ENCODE measurements at regions of chr5 and their contacts with region 1.

Region 1: DNA sequence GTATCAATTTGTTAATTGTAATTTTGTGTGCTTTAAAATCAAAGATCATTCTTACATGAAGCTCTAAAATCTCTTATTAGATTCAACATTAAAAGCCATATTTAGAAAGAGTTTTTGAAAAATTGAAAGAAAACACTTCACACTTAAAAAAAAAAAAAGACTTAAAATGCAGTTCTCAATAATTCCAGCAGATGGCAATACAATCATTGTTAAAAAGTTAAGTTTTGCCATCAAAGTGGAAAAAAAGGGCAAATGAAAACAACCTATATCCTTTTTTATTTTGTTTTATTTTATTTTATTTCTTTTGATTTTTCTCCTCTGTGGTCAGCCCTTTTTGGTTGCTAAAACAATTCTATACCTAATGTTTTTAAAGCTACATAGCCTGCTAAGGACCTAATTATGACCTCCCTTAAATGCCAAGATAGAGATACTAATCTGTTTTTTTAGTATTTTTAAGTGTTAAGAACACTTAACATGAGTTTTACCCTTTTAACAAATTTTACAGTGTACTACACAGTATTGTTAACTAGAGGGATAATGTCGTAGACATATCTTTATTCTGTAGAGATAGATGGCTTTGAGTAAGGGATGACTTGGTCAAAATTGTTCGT is 154.2 kb upstream of the DAB2 start:
- DNase-seq: peak in 3 of 14 experiments; percentile 21 to 52 (median 31)
- ATAC-seq: no peak
- H3K4me3 ChIP-seq: no peak overlapping the region
- H3K4me3 Mint-ChIP-seq: no peak overlapping the region
- H3K27ac ChIP-seq: no peak overlapping the region
- H3K27ac Mint-ChIP-seq: no peak overlapping the region
- H3K4me1 ChIP-seq: no peaks in the 10 kb centered on the region
- H3K4me1 Mint-ChIP-seq: peaks cover 10% of the 10 kb centered on the region
- H3K27me3 ChIP-seq: no peaks in the 10 kb centered on the region
- H3K27me3 Mint-ChIP-seq: peaks cover 6% of the 10 kb centered on the region
- CTCF ChIP-seq: peak; percentile 91

Region 2: DNA sequence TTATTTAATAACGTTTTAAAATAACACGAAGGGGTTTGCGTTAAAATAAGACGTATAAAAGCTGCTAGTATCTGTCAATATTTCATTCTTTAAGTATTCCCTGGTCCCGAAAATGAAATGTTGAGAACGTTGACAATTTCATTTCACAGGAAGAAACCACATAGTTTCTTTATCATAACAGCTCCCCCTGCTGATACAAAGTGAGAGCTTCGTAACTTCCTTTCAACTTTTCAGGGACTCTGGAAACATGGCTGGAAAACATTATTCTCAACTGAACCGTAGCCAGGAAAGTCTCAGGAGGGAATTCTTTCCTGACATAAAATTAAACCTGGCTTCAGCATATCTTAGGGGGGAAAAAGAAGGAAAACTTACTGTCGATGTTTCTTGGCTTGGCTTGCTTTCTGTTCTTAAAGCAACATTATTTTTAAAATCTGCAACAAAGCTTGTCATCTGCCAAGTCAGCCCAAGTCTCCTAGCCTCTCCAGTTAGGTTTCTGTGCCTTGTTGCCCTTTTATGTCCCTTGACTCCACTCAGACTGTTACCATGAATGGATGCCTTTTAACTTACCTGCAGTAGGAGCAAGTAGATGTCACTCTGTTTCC is 31.3 kb before region 1 on chr5:
- CTCF ChIA-PET with region 1: no interaction called
- POLR2A ChIA-PET with region 1: no interaction called
- intact Hi-C with region 1: no loop called
- DNase-seq: peak in 4 of 14 experiments; percentile 21 to 65 (median 58)
- ATAC-seq: no peak
- H3K4me3 ChIP-seq: no peak overlapping the region
- H3K4me3 Mint-ChIP-seq: no peak overlapping the region
- H3K27ac ChIP-seq: no peak overlapping the region
- H3K27ac Mint-ChIP-seq: no peak overlapping the region
- H3K4me1 ChIP-seq: no peaks in the 10 kb centered on the region
- H3K4me1 Mint-ChIP-seq: peaks cover 7% of the 10 kb centered on the region
- H3K27me3 ChIP-seq: peaks cover 0 to 6% of the 10 kb centered on the region in 2 experiments
- H3K27me3 Mint-ChIP-seq: peaks cover 8% of the 10 kb centered on the region
- CTCF ChIP-seq: peak; percentile 84

Region 3: GRCh38 chr5:39948867-39949468 is 370.0 kb after region 1 on chr5:
- CTCF ChIA-PET with region 1: no interaction called
- POLR2A ChIA-PET with region 1: no interaction called
- intact Hi-C with region 1: loop called in 1 of 2 experiments (anchors 5 kb)
- DNase-seq: peak; percentile 7 to 85 (median 50)
- ATAC-seq: peak; percentile 77
- H3K4me3 ChIP-seq: no peak overlapping the region
- H3K4me3 Mint-ChIP-seq: no peak overlapping the region
- H3K27ac ChIP-seq: no peak overlapping the region
- H3K27ac Mint-ChIP-seq: no peak overlapping the region
- H3K4me1 ChIP-seq: no peaks in the 10 kb centered on the region
- H3K4me1 Mint-ChIP-seq: peaks cover 5% of the 10 kb centered on the region
- H3K27me3 ChIP-seq: no peaks in the 10 kb centered on the region
- H3K27me3 Mint-ChIP-seq: no peaks in the 10 kb centered on the region
- CTCF ChIP-seq: peak; percentile 72

Region 4: GRCh38 chr5:40071870-40072269 is 492.9 kb after region 1 on chr5:
- CTCF ChIA-PET with region 1: no interaction called
- POLR2A ChIA-PET with region 1: no interaction called
- intact Hi-C with region 1: no loop called
- DNase-seq: no peak
- ATAC-seq: no peak
- H3K4me3 ChIP-seq: no peak overlapping the region
- H3K4me3 Mint-ChIP-seq: no peak overlapping the region
- H3K27ac ChIP-seq: no peak overlapping the region
- H3K27ac Mint-ChIP-seq: no peak overlapping the region
- H3K4me1 ChIP-seq: no peaks in the 10 kb centered on the region
- H3K4me1 Mint-ChIP-seq: no peaks in the 10 kb centered on the region
- H3K27me3 ChIP-seq: no peaks in the 10 kb centered on the region
- H3K27me3 Mint-ChIP-seq: no peaks in the 10 kb centered on the region
- CTCF ChIP-seq: no peak

Measured in CD4-positive, alpha-beta T cell (primary cell).